IMR-90 (cell line): ENCODE measurements at regions of chr2 and their contacts with region 1.

Region 1: GRCh38 chr2:55144922-55145820 is 86.9 kb downstream of the CLHC1 start:
- DNase-seq: no peak
- ATAC-seq: no peak
- H3K4me3 ChIP-seq: no peak overlapping the region
- H3K27ac ChIP-seq: no peak overlapping the region
- H3K4me1 ChIP-seq: peaks cover 10% of the 10 kb centered on the region
- H3K27me3 ChIP-seq: no peaks in the 10 kb centered on the region
- CTCF ChIP-seq: no peak
- POLR2A ChIP-seq: no peak
- RAD21 ChIP-seq: no peak

Region 2: GRCh38 chr2:55133467-55134315 is 11.5 kb before region 1 on chr2:
- CTCF ChIA-PET with region 1: no interaction called
- POLR2A ChIA-PET with region 1: no interaction called
- dilution Hi-C with region 1: no loop called
- in situ Hi-C with region 1: no loop called
- intact Hi-C with region 1: loop called (anchors 1 kb)
- DNase-seq: peak; percentile 96
- ATAC-seq: peak; percentile 88
- H3K4me3 ChIP-seq: peak overlapping the region; percentile 50
- H3K27ac ChIP-seq: peak overlapping the region; percentile 99
- H3K4me1 ChIP-seq: peaks cover 19% of the 10 kb centered on the region
- H3K27me3 ChIP-seq: no peaks in the 10 kb centered on the region
- CTCF ChIP-seq: no peak
- POLR2A ChIP-seq: peak; percentile 48; the same call in 1 of the 2 replicates
- RAD21 ChIP-seq: no peak